ENCODE measurements at regions of chr20 and their contacts with region 1.

Region 1: GRCh38 chr20:58870239-58871014 is 17.9 kb downstream of the GNAS start:
- DNase-seq: peak; percentile 80
- H3K4me3 ChIP-seq: peak overlapping the region in 1 of 2 experiments; percentile 19; a peak in 1 of 4 replicates
- H3K27ac ChIP-seq: no peak overlapping the region; a peak in 1 of 4 replicates
- H3K4me1 ChIP-seq: peaks cover 0 to 14% of the 10 kb centered on the region in 2 experiments; a peak in 1 of 4 replicates
- H3K27me3 ChIP-seq: no peaks in the 10 kb centered on the region
- CTCF ChIP-seq: peak; percentile 92
- EP300 ChIP-seq: no peak
- RAD21 ChIP-seq: peak; percentile 96

Region 2: GRCh38 chr20:58760856-58761255 is 109.6 kb before region 1 on chr20:
- CTCF ChIA-PET with region 1: no interaction called
- POLR2A ChIA-PET with region 1: no interaction called
- DNase-seq: no peak
- H3K4me3 ChIP-seq: no peak overlapping the region
- H3K27ac ChIP-seq: no peak overlapping the region
- H3K4me1 ChIP-seq: no peaks in the 10 kb centered on the region
- H3K27me3 ChIP-seq: peaks cover 14% of the 10 kb centered on the region
- CTCF ChIP-seq: no peak
- EP300 ChIP-seq: no peak
- RAD21 ChIP-seq: no peak

Region 3: DNA sequence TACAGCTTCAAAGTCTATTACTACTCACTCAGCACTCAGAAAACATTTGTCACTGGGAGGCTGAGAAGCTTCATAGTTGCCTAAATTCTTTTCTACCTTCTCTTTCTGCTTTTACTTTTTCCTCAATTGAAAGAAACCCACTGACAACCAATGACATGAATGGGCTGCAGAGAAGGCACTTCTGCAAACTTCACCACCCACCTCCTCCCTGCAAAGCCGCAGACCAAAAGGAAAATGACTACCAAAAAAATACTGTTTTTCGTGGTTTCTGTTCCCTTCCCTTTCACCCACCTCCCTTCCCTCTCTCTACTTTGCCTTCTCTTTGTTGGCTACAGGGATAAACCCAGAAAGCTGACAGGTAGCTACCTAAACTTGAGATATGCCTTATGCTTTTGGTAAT is 23.0 kb before region 1 on chr20:
- CTCF ChIA-PET with region 1: interaction called, 16 read pairs
- POLR2A ChIA-PET with region 1: no interaction called
- DNase-seq: no peak
- H3K4me3 ChIP-seq: no peak overlapping the region
- H3K27ac ChIP-seq: no peak overlapping the region
- H3K4me1 ChIP-seq: peaks cover 0 to 24% of the 10 kb centered on the region in 2 experiments; a peak in 1 of 4 replicates
- H3K27me3 ChIP-seq: no peaks in the 10 kb centered on the region
- CTCF ChIP-seq: no peak
- EP300 ChIP-seq: no peak
- RAD21 ChIP-seq: no peak

Measured in SK-N-SH (cell line).